ENCODE measurements at regions of chr12 and their contacts with region 1.

Region 1: GRCh38 chr12:11486623-11487444 is 91.5 kb upstream of the PRB2 start:
- DNase-seq: peak; percentile 83
- ATAC-seq: peak; percentile 93
- H3K4me3 ChIP-seq: no peak overlapping the region
- H3K27ac ChIP-seq: no peak overlapping the region
- H3K4me1 ChIP-seq: 0 out of 4 replicates have a peak, but pooled peaks cover 0 to 3% of the 10 kb centered on the region in 2 experiments
- H3K27me3 ChIP-seq: peaks cover 23% of the 10 kb centered on the region; the same call in 1 of the 2 replicates
- CTCF ChIP-seq: peak; percentile 86 to 100 (median 98)
- POLR2A ChIP-seq: no peak
- RAD21 ChIP-seq: peak; percentile 98

Region 2: GRCh38 chr12:10243818-10244520 is 1242.9 kb before region 1 on chr12:
- CTCF ChIA-PET with region 1: no interaction called
- POLR2A ChIA-PET with region 1: no interaction called
- RAD21 ChIA-PET with region 1: no interaction called
- intact Hi-C with region 1: loop called (anchors 5 kb)
- DNase-seq: no peak
- ATAC-seq: no peak
- H3K4me3 ChIP-seq: no peak overlapping the region
- H3K27ac ChIP-seq: no peak overlapping the region
- H3K4me1 ChIP-seq: no peaks in the 10 kb centered on the region
- H3K27me3 ChIP-seq: no peaks in the 10 kb centered on the region
- CTCF ChIP-seq: no peak
- POLR2A ChIP-seq: no peak
- RAD21 ChIP-seq: no peak

Region 3: DNA sequence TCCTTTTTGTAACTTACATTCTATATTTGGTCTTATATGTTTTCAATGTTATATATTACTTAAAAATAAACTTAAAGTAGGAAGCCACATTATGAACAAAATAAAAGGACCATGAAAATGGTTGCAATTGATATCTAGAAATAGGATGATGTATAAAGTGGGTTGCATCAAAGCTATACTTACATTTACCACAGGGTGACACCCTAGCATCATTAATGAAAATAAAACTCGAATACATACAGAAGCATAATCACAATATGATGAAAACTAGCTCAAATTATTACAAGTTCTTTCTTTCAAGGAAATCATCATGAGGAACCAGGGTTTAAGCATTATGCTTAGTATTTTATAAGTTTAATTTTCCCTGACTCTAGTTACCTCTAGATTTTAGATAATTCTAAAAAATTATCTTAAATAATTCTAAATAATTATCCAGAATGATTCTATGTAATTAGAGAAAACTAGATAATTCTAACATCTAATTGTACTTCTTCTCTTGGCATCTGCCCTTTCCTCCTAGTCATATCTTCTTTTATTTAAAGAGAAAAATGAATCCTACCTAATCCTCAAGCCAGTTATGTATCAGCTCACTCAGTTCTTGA is 715.6 kb before region 1 on chr12:
- CTCF ChIA-PET with region 1: interaction called, 67 read pairs
- POLR2A ChIA-PET with region 1: no interaction called
- RAD21 ChIA-PET with region 1: interaction called in 1 of 2 experiments, 3 read pairs
- intact Hi-C with region 1: loop called (anchors 1 kb)
- DNase-seq: peak; percentile 26
- ATAC-seq: peak; percentile 68
- H3K4me3 ChIP-seq: no peak overlapping the region
- H3K27ac ChIP-seq: no peak overlapping the region
- H3K4me1 ChIP-seq: no peaks in the 10 kb centered on the region
- H3K27me3 ChIP-seq: peaks cover 29% of the 10 kb centered on the region
- CTCF ChIP-seq: peak; percentile 39 to 88 (median 71); a peak in 4 of 6 replicates
- POLR2A ChIP-seq: no peak
- RAD21 ChIP-seq: peak; percentile 85

Region 4: DNA sequence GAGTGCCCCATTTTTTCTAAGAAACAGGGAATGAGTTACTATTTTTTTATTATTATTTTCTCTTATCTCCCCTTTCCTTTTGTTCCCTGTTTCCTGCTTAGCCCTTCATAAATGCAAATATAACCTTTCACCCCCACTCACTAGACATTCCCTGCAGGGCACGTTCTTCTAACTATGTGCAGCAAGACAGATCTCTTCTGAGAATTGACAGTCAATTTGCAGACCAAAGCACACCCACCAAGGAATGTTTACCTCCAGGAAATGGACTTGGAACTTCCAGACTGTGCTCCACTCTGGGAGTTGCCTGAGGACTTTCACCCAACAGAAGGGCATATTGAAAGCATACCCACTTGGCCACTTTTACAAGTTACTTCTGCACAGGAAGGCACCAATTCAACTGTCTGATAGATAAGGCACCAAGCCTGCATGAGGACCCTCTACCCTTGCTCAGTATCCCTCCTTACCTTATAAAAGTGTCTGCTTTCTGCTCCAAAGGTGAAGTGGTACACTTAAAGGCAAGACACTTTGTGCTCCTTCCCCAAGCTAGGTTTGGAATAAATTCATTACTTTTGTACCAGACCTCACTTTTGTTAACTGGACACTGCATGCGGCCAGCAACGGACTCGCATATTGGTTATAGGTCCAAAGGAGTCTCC is 470.9 kb before region 1 on chr12:
- CTCF ChIA-PET with region 1: no interaction called
- POLR2A ChIA-PET with region 1: no interaction called
- RAD21 ChIA-PET with region 1: no interaction called
- intact Hi-C with region 1: no loop called
- DNase-seq: no peak
- ATAC-seq: no peak
- H3K4me3 ChIP-seq: no peak overlapping the region
- H3K27ac ChIP-seq: no peak overlapping the region
- H3K4me1 ChIP-seq: no peaks in the 10 kb centered on the region
- H3K27me3 ChIP-seq: no peaks in the 10 kb centered on the region
- CTCF ChIP-seq: no peak
- POLR2A ChIP-seq: no peak
- RAD21 ChIP-seq: no peak

Region 5: GRCh38 chr12:11202811-11203210 is 284.0 kb before region 1 on chr12:
- CTCF ChIA-PET with region 1: interaction called, 11 read pairs
- POLR2A ChIA-PET with region 1: no interaction called
- RAD21 ChIA-PET with region 1: interaction called in 1 of 2 experiments, 3 read pairs
- intact Hi-C with region 1: no loop called
- DNase-seq: no peak
- ATAC-seq: no peak
- H3K4me3 ChIP-seq: no peak overlapping the region
- H3K27ac ChIP-seq: no peak overlapping the region
- H3K4me1 ChIP-seq: no peaks in the 10 kb centered on the region
- H3K27me3 ChIP-seq: no peaks in the 10 kb centered on the region
- CTCF ChIP-seq: no peak
- POLR2A ChIP-seq: no peak
- RAD21 ChIP-seq: no peak

Measured in HCT116 (cell line).